ENCODE measurements at regions of chr1 and their contacts with region 1.

Region 1: GRCh38 chr1:201170533-201171062 is 16.3 kb upstream of the TMEM9 start:
- DNase-seq: peak; percentile 81 to 97 (median 93)

Region 2: DNA sequence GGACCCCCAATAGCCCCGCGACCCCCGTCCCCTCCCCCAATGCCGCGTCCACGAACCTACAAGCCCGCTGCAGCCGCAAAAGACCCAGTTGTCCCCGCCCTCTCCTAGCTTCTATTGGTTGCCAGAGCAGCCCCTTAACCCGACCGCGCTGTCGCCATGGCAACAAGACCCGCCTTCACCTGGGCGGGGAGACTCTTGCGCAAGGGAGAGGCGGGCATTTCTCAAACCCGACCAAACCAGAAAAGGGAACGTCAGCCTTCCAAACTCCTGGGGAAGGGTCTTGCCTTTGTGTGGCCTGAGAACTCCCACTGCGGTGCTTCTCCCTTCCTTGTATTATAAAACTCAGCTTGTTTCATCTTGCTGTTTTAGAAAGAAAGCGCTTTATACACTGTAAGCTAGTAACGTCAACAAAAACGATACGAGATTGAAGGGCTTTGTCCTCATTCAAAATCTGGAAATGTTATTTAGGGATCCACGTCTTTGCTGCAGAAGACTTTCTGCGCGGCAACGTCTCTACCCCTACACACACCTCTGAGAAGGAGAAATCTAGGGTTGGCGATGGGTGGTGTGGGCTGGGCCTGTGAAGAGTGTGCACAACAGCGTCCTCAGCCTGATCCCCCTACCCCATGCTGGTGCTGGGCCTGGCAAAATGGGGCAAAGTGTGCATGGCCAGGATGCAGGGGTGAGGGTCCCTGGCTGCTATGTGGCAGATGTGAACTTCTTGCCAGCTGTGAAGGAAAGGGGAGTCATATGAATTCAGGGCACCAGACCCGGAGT is 16.0 kb before region 1 on chr1 and contains the start of gene TMEM9:
- intact Hi-C with region 1: loop called (anchors 2 kb)
- DNase-seq: peak; percentile 97 to 100 (median 99)

Region 3: GRCh38 chr1:201329286-201329685 is 158.7 kb after region 1 on chr1:
- intact Hi-C with region 1: no loop called
- DNase-seq: no peak

Measured in head of caudate nucleus (tissue), 42 donors.